ENCODE measurements at regions of chr11 and their contacts with region 1.

Region 1: DNA sequence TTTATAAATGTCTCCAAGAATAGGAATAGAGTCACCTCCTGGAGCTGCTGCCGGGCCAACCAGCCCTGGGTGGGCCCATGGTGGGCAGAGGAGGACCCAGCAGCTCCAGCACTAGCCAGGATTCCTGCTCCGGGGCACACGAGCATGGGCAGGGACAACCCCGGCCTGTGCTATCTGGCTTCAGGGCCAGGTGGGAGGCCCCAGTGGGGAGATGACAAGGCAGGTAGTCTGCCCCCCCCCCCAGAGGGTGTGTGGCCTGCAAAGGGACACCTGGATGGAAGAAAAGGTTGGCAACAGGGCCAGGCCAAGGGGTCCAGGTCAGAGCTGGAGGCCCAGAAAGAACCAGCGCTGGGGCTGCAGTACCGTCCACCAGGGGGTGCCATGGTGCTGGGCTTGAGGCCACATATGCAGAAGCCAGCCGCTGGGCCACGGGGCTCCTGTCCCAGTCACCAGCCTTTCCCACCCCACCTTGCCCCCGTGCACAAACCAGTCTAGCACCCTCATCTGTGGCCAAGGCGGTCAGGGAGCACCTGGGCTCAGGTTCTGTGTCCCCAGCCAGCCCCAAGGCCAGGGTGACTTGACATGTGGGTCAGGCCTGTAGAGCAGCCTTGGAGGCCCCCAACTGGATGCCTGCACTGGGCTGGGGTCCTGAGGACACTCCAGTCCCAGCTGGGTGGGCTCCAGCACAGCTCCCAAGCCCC is 3.5 kb downstream of the TSPAN32 start:
- DNase-seq: peak; percentile 95
- ATAC-seq: peak; percentile 34

Region 2: DNA sequence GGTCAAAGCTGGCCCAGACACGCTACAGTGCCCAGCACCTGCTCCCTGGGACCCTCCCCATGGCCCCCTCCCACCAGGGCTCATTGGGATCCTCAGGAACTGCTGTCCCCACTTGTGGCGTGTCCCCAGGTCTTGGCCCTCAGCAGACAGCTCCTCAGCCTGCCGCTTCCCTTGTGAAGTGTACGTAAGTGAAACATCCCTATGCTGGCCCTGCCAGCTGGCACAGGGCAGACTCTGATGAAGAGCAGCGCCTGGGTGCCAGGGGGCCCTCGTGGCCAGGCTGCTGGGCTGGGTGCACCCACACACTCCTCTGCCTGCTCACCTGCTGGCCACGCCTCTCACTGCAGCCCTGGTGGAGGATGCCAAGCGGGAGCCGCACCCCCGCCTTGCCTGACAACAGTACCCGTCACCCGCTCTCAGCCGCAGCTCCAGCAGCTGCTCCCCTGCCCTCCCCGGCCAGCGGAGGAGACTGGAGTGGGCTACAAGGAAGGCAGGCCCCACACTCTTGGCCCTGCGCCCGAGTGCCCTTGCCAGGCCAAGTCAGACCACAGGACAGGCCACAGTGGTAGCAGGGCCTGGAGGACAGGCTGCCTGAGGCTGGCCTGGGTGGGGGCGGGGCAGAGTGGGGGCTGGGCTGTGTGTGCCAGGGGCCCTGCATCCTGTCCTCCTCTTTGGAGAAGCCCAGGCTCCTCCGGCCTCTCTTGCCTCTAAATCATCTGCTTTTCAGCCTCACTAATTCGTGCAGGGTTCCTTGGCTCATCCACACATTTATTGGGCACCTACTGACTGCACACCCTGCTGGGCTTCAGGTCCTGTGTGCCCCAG is 205.6 kb before region 1 on chr11:
- intact Hi-C with region 1: no loop called
- DNase-seq: peak; percentile 64
- ATAC-seq: no peak

Region 3: DNA sequence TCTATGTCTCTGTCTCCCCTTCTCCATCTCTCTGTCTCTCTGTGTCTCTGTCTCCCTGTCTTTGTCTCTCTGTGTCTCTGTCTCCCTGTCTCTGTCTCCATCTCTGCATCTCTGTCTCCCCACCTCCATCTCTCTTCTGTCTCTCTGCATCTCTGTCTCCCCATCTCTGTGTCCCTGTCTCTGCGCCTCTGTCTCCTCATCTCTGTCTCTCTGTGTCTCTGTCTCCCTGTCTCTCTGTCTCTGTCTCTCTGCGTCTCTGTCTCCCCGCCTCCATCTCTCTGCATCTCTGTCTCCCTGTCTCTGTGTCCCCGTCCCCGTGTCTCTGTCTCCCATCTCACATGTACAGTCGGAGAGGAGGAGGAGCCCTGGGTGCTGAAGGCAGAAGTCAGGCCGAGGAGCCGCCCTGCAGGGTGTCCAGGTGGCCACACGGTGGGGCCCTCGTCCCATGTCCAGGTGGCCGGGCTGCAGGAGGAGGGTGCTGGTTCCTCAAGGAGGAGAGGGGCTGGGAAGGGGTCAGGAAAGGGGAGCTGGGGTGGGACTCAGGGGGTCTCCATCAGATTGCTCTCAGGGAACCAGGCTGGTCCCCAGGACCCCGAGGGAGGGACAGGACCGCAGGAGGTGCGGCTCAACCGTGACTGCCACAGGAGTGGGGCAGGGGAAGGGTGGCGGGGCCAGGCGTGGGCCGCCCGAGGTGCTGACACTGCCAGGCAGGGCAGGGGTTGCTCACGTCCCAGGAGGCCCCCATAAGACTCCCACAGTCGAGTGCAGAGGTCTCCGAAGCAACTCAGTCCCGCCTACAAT is 108.1 kb before region 1 on chr11:
- intact Hi-C with region 1: loop called (anchors 1 kb)
- DNase-seq: peak; percentile 89
- ATAC-seq: peak; percentile 76

Region 4: DNA sequence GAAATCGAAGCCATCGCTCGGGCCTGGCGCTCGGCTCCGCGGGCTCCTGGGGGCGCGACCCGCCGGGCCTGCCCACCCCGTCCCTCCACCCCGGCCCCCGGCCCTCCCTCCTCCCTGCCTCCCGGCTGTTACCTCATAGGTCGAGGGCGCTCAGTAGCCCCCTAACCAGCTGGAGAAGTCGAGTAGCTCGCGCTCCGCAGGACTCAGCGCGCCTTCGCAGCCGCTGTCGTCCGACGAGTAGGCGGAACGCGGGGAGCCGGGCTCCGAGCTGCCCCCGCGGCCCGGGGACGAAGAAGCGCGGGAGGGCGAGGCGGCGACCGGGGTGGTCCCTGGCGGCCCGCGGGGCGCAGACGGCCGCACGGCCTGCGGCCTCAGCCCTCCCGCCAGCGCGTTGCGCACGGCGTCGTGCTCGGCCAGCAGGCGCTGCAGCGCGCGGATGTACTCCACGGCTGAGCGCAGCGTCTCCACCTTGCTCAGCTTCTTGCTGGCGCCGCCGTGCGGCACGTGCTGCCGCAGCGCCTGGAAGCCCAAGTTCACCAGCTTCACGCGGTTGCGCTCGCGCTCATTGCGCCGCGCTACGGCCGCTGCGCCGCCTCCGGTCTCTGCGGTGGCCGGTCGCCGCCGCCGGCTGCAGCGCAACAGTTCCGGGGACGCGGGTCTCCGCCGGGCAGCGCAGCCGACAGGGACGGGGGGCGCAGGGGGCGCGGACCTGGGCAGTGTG is 35.5 kb before region 1 on chr11:
- intact Hi-C with region 1: no loop called
- DNase-seq: peak; percentile 82
- ATAC-seq: peak; percentile 53

Region 5: DNA sequence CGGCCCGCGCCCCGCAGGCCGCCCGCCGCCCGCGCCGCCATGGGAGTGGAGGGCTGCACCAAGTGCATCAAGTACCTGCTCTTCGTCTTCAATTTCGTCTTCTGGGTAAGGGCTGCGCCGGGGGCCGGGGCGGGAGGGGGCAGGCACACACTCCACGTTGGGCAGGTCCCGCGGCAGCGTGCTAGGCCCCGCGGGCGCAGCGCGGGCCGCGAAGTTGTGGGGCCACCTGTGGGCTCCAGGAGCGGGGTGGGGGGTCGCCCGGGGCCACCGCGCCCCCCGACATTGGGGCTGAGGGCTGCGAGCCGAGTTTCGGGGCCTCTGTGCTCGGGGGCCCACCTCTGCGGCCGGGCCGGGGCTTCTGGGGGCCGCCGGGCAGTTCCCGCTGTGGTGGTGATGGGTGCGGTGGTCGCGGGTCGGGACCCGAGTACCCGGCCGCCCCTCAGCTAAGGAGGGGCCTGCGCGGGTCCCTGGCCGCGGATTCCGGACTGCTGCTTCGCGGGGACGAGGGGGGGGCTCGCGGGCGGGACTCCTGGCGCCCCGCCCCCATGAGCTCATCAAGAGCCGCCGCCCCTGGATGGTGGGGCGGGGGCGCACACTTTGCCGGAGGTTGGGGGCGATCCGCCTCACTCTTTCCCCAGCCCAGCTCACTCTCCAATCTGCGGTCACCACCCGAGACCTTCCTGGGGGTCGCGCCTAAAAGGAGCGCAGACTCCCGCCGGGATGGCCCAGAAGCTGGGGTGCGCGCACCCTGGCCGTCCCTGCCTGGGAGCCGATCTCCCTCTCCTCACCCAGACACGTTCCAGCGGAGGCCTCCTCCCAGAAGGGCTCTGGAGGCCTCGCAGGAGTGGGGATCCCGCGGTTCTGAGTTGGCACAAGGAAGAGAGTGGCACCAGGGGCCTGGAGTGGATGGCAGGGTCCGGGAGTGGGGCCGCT is 72.5 kb after region 1 on chr11:
- intact Hi-C with region 1: loop called (anchors 1 kb)
- DNase-seq: peak; percentile 84
- ATAC-seq: peak; percentile 17

Region 6: GRCh38 chr11:2420502-2421225 is 115.4 kb after region 1 on chr11:
- intact Hi-C with region 1: loop called (anchors 1 kb)
- DNase-seq: peak; percentile 89
- ATAC-seq: peak; percentile 95

Region 7: GRCh38 chr11:2892215-2893020 is 587.1 kb after region 1 on chr11:
- intact Hi-C with region 1: loop called (anchors 10 kb)
- DNase-seq: peak; percentile 83
- ATAC-seq: peak; percentile 40

Measured in Right ventricle myocardium inferior (tissue), 1 donor.